AG04450 (cell line): ENCODE measurements at regions of chr5 and their contacts with region 1.

Region 1: GRCh38 chr5:37412515-37413277 is 33.6 kb downstream of the WDR70 start:
- DNase-seq: peak; percentile 64
- H3K4me3 ChIP-seq: no peak overlapping the region
- H3K27ac ChIP-seq: no peak overlapping the region
- H3K27me3 ChIP-seq: no peaks in the 10 kb centered on the region
- CTCF ChIP-seq: peak; percentile 99

Region 2: DNA sequence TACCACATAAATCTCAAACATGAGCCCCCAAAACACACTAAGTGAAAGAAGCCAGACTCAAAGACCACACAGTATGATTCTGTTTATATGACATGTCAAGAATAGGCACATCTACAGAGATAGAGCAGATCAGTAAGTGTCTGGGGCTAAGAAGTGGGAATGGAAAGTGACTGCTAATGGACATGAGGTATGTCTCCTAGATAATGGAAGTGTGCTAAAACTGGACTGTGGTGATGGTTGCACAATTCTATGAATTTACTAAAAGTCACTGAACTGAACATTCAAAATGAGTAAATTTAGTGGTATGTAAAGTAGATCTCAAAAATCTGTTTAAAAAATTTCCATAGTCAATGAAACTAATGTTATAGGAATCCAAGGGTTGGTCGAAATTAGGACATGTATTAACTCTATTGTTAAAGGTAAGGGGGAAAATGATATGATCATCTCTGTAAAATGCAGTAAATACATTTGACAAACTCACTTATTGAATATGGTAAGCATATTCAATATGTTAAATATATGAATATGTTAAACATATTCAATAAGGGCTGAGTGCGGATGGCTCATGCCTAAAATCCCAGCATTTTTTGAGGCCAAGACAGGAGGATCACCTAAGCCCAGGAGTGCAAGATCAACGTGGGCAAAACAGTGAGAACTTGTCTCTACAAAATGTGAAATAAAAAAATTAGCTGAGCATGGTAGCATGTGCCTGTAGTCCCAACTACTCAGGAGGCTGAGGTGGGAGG is 93.5 kb before region 1 on chr5:
- CTCF ChIA-PET with region 1: no interaction called
- POLR2A ChIA-PET with region 1: no interaction called
- DNase-seq: no peak
- H3K4me3 ChIP-seq: no peak overlapping the region
- H3K27ac ChIP-seq: no peak overlapping the region
- H3K27me3 ChIP-seq: no peaks in the 10 kb centered on the region
- CTCF ChIP-seq: no peak

Region 3: DNA sequence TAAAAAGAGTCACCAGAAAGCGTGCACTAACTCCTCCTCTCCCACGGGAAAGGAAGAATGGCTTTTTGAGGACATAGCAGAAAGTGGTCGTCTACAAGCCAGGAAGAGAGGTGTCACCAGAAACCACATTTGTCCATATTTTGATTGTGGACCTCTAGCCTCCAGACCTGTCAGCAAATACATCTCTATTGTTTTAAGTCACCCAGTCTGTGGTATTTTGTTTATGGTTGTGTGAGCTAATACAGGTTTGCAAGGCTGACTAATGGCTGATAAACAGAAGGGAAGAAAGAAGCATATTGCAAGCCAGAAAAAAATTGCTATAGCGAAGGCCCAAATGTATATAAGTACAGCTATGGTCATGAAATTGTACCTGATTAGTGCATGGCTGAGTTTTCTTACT is 12.2 kb before region 1 on chr5:
- CTCF ChIA-PET with region 1: interaction called, 37 read pairs
- POLR2A ChIA-PET with region 1: no interaction called
- DNase-seq: peak; percentile 1
- H3K4me3 ChIP-seq: no peak overlapping the region
- H3K27ac ChIP-seq: no peak overlapping the region
- H3K27me3 ChIP-seq: no peaks in the 10 kb centered on the region
- CTCF ChIP-seq: no peak

Region 4: DNA sequence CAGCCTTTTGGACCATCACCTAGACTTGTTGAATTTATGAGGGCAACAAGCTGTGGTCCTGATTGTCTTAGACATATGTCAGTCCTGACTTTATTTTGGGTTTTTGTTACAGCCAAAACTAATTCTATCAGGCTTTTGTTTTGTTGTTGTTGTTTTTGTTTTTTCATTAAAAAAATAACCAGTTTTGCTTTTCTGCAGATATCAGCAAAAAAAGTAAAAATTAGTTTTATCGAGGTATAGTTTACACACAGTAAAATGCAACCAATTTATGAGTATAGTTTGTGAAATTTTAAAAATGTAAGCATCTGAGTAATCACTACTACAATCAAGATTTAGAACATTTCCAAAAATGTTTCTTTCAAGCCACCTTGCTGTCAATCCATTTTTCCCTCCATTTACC is 15.3 kb after region 1 on chr5:
- CTCF ChIA-PET with region 1: interaction called, 11 read pairs
- POLR2A ChIA-PET with region 1: no interaction called
- DNase-seq: no peak
- H3K4me3 ChIP-seq: no peak overlapping the region
- H3K27ac ChIP-seq: no peak overlapping the region
- H3K27me3 ChIP-seq: no peaks in the 10 kb centered on the region
- CTCF ChIP-seq: no peak

Region 5: GRCh38 chr5:37722236-37723146 is 309.8 kb after region 1 on chr5:
- CTCF ChIA-PET with region 1: interaction called, 10 read pairs
- POLR2A ChIA-PET with region 1: no interaction called
- DNase-seq: peak; percentile 65
- H3K4me3 ChIP-seq: no peak overlapping the region
- H3K27ac ChIP-seq: no peak overlapping the region
- H3K27me3 ChIP-seq: no peaks in the 10 kb centered on the region
- CTCF ChIP-seq: no peak

Region 6: DNA sequence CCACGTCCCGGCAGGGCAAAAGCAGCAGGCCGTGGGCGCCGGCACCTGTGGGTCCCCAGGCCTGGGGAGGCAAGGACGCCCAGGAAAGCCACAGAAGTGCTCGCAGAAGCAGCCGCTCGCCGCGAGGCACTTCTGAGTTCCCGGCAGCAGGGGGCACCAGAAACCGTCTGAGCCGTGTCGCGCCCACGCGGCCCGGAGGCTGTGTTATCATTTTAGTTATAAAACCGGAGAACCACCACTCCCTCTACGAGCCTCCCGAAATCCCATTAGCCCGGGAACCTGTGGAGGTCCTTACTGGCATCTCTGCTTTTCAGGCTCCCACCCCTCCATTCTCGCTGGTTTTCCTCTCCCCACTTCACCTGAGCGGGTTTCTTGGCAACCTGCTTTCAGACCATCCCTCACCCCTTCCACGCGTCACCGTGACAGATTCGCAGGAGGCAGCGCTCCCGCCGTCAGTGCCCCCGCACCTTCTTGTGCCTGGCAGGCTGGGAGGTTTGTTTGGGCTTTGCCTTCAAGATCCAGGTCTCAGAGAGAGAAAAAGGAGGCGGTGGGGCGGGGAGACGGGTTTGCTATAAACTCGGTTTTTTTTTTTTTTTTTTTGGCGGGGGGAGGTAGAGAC is 424.8 kb after region 1 on chr5:
- CTCF ChIA-PET with region 1: interaction called, 13 read pairs
- POLR2A ChIA-PET with region 1: no interaction called
- DNase-seq: peak; percentile 65
- H3K4me3 ChIP-seq: peak overlapping the region; percentile 74
- H3K27ac ChIP-seq: peak overlapping the region; percentile 70
- H3K27me3 ChIP-seq: peaks cover 3% of the 10 kb centered on the region
- CTCF ChIP-seq: peak; percentile 88

Region 7: DNA sequence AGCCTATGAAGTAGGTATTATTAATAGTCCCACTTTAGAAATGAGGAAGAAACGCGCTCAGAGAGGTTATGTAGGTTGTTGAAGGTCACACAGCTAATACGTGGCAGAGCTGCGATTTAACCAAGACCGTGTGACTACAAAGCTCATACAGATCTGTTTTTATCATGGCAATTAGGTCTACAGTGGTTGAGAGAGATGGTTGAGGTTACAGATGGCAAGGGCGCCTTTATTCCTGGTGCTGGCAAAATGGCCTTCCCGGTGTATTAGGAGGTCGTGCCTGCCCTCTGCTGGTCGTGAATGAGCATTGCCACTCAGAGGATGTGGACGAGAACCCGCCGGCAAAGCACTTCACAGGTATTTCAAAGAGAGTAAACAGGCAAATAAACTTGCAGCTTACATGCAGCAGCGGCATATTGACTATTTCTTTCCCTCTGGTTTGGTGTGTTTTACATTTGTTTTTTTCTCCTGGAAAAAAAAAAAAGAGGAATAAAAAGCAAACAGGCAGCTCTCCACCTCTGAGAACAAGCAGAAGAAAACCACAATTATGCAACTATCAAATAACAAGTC is 780.4 kb after region 1 on chr5:
- CTCF ChIA-PET with region 1: interaction called, 68 read pairs
- POLR2A ChIA-PET with region 1: no interaction called
- DNase-seq: peak; percentile 29
- H3K4me3 ChIP-seq: no peak overlapping the region
- H3K27ac ChIP-seq: no peak overlapping the region
- H3K27me3 ChIP-seq: peaks cover 37% of the 10 kb centered on the region
- CTCF ChIP-seq: peak; percentile 93